GM12878 (cell line): ENCODE measurements at regions of chr10 and their contacts with region 1.

Region 1: DNA sequence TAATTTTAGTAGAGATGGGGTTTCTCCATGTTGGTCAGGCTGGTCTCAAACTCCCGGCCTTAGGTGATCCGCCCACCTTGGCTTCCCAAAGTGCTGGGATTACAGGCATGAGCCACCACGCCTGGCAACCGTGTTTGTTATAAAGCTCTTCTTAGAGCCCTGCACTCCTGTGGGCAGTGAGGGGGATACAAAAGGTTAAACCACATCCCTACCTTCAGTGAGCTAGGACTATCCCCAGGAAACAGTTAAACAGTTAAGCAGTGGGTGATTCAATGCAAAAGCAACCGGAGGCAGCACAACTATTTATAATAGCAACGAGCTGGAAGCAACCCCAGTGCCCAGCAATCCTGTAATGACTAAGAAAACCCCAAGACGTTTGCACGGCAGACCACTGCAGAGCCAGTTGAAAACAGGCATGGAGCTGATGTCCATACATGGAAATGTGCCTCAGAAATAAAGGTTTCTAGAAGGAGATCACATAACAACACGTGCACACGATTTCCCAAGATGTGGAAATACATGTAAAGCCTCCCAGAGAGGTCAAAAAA is 107.2 kb upstream of the LYZL2 start:
- DNase-seq: peak; percentile 94
- ATAC-seq: peak; percentile 85
- H3K4me3 ChIP-seq: no peak overlapping the region
- H3K27ac ChIP-seq: peak overlapping the region; percentile 91
- H3K4me1 ChIP-seq: peaks cover 25% of the 10 kb centered on the region
- H3K27me3 ChIP-seq: no peaks in the 10 kb centered on the region
- CTCF ChIP-seq: no peak
- EP300 ChIP-seq: peak; percentile 88 to 95
- POLR2A ChIP-seq: no peak
- RAD21 ChIP-seq: no peak

Region 2: GRCh38 chr10:30701451-30702173 is 35.1 kb before region 1 on chr10:
- CTCF ChIA-PET with region 1: interaction called, 4 read pairs
- POLR2A ChIA-PET with region 1: interaction called, 3 read pairs
- RAD21 ChIA-PET with region 1: interaction called, 3 read pairs
- SMC1A ChIA-PET with region 1: interaction called, 3 read pairs
- in situ Hi-C with region 1: no loop called
- intact Hi-C with region 1: loop called (anchors 1 kb)
- DNase-seq: peak; percentile 87
- ATAC-seq: peak; percentile 69
- H3K4me3 ChIP-seq: peak overlapping the region; percentile 27; the same call in 1 of the 2 replicates
- H3K27ac ChIP-seq: peak overlapping the region; percentile 99
- H3K4me1 ChIP-seq: peaks cover 43% of the 10 kb centered on the region
- H3K27me3 ChIP-seq: no peaks in the 10 kb centered on the region
- CTCF ChIP-seq: no peak
- EP300 ChIP-seq: peak; percentile 0 to 28; a peak in 2 of 4 replicates
- POLR2A ChIP-seq: peak; percentile 65
- RAD21 ChIP-seq: no peak

Region 3: DNA sequence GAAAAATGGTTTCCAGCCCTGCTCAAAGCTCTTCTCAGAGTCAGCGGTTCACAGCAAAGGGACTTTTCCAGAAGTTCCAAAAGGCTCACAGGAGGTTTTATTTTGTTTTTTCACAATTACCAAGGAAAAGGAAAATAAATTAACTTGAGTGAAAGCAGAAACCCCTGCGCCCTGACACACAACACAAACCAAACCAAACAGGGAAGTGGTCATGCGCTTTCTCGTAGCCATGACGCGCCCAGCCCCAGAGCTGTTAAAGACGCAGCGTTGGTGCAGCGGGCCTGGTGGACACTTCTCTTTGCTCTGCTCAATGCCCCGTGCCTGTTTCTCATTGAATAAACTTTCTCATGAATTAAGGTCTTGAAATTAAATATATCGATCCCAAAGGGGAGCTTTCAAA is 27.2 kb after region 1 on chr10:
- CTCF ChIA-PET with region 1: no interaction called
- POLR2A ChIA-PET with region 1: no interaction called
- RAD21 ChIA-PET with region 1: no interaction called
- SMC1A ChIA-PET with region 1: no interaction called
- in situ Hi-C with region 1: no loop called
- intact Hi-C with region 1: no loop called
- DNase-seq: no peak
- ATAC-seq: peak; percentile 46; the same call in 1 of the 3 replicates
- H3K4me3 ChIP-seq: no peak overlapping the region
- H3K27ac ChIP-seq: no peak overlapping the region
- H3K4me1 ChIP-seq: peaks cover 10% of the 10 kb centered on the region; the same call in 1 of the 2 replicates
- H3K27me3 ChIP-seq: no peaks in the 10 kb centered on the region
- CTCF ChIP-seq: no peak
- EP300 ChIP-seq: no peak
- POLR2A ChIP-seq: no peak
- RAD21 ChIP-seq: no peak

Region 4: DNA sequence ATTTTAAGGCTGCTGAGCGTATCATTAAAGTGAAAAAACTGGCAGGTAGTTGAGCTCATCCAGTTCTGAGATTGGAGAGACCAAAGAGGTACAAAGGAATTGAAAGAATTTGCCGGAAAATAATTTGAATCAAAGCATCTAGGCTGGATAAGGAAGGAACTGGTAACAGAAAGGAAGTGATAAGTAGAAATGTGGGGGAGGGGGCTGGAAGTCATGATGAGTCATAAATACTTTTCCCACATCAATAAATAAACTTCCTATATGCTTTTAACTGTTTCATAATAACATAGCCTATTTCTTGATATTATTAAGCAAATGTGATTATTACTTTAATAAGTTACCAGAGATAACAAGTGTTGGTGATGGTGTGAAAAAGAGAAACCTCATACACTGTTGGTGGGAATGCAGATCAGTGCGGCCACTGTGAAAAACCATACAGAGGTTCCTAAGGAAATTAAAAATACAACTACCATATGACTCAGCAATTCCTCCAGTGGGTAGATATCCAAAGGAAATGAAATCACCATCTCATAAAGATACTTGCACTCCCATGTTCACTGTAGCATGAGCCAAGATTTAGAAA is 267.9 kb after region 1 on chr10:
- CTCF ChIA-PET with region 1: no interaction called
- POLR2A ChIA-PET with region 1: no interaction called
- RAD21 ChIA-PET with region 1: no interaction called
- SMC1A ChIA-PET with region 1: no interaction called
- in situ Hi-C with region 1: no loop called
- intact Hi-C with region 1: loop called (anchors 10 kb)
- DNase-seq: no peak
- ATAC-seq: peak; percentile 43
- H3K4me3 ChIP-seq: no peak overlapping the region
- H3K27ac ChIP-seq: no peak overlapping the region
- H3K4me1 ChIP-seq: peaks cover 5% of the 10 kb centered on the region
- H3K27me3 ChIP-seq: no peaks in the 10 kb centered on the region
- CTCF ChIP-seq: no peak
- EP300 ChIP-seq: peak in 1 of 2 experiments; percentile 72; a peak in 1 of 4 replicates
- POLR2A ChIP-seq: no peak
- RAD21 ChIP-seq: no peak

Region 5: GRCh38 chr10:31090894-31091607 is 354.3 kb after region 1 on chr10:
- CTCF ChIA-PET with region 1: interaction called, 3 read pairs
- POLR2A ChIA-PET with region 1: no interaction called
- RAD21 ChIA-PET with region 1: no interaction called
- SMC1A ChIA-PET with region 1: no interaction called
- in situ Hi-C with region 1: no loop called
- intact Hi-C with region 1: loop called (anchors 5 kb)
- DNase-seq: peak; percentile 84
- ATAC-seq: peak; percentile 96
- H3K4me3 ChIP-seq: no peak overlapping the region
- H3K27ac ChIP-seq: no peak overlapping the region
- H3K4me1 ChIP-seq: peaks cover 4% of the 10 kb centered on the region; the same call in 1 of the 2 replicates
- H3K27me3 ChIP-seq: no peaks in the 10 kb centered on the region
- CTCF ChIP-seq: no peak
- EP300 ChIP-seq: peak in 1 of 2 experiments; percentile 75; a peak in 1 of 4 replicates
- POLR2A ChIP-seq: no peak
- RAD21 ChIP-seq: peak; percentile 26; the same call in 1 of the 2 replicates

Region 6: GRCh38 chr10:31707093-31708039 is 970.6 kb after region 1 on chr10:
- CTCF ChIA-PET with region 1: no interaction called
- POLR2A ChIA-PET with region 1: no interaction called
- RAD21 ChIA-PET with region 1: no interaction called
- SMC1A ChIA-PET with region 1: no interaction called
- in situ Hi-C with region 1: no loop called
- intact Hi-C with region 1: loop called (anchors 10 kb)
- DNase-seq: peak; percentile 90
- ATAC-seq: peak; percentile 93
- H3K4me3 ChIP-seq: peak overlapping the region; percentile 52
- H3K27ac ChIP-seq: peak overlapping the region; percentile 92
- H3K4me1 ChIP-seq: peaks cover 31% of the 10 kb centered on the region
- H3K27me3 ChIP-seq: no peaks in the 10 kb centered on the region
- CTCF ChIP-seq: no peak
- EP300 ChIP-seq: peak; percentile 80 to 88
- POLR2A ChIP-seq: no peak
- RAD21 ChIP-seq: peak; percentile 28; the same call in 1 of the 2 replicates